GM12878 (cell line): ENCODE measurements at regions of chr11 and their contacts with region 1.

Region 1: DNA sequence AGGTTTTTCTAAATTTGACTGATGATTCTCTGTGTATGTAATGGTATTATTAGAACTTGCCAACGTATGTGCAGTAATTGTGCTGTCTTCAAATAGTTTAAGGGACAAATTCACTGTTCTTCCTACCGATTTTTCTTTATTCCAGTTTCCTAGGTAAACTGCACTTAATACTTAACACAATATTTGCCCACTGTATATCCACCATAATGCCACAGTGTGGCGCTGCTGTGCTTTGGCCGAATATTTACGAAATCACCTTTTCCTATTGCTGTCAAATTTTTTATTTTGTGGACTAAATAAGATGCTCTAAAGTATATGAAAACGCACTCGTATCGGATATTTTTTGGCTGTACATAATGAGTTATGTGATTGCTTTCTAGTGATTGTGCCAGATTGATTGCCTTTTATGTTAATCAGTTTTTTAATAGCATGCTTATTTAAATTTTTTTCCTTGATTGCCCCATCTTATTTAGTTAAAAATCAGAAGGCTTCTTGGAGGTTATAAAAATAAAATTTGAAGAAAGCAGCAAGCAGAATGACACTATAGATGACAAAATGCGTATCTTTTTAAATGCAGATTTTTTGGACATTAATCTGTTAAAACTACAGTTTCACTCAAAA is 10.5 kb downstream of the AASDHPPT start:
- DNase-seq: no peak
- ATAC-seq: peak; percentile 49
- H3K4me3 ChIP-seq: no peak overlapping the region
- H3K27ac ChIP-seq: no peak overlapping the region
- H3K4me1 ChIP-seq: peaks cover 13% of the 10 kb centered on the region
- H3K27me3 ChIP-seq: no peaks in the 10 kb centered on the region
- CTCF ChIP-seq: peak; percentile 74 to 91 (median 86)
- EP300 ChIP-seq: no peak
- POLR2A ChIP-seq: no peak
- RAD21 ChIP-seq: peak; percentile 94

Region 2: DNA sequence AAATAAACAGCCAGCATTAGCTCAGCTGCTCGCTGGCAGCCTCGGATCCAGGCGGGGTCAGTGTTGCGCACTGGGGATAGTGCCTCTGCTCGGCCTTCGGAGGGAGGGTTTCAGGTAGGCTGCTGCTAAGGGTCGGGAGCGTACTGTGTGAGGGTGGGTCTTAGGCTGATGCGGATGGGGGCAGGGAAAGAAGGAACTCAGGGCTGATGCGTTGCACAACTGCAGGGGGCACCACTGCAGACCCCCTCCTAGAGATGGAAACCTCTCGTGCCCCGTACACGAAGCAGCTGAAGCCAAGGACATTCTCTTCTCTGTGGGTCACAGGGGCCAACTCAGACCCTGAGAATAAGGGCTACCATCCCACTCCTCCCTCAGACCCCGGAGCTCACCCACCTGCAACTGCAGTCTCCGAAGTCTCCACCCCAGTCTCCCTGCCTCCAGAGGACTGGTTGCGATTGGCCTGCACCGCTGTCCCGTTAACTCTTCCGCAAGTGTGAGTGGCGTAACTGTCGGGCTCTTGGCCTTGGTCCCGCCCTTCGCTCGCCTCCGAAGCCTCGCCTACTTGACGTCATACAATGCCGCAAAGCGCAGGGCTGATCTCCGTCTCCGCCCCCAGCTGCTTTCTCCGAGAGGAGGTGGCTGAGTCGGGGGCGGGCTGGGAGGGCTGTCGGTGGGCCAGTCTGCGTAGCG is 10.9 kb before region 1 on chr11 and contains the start of gene KBTBD3:
- CTCF ChIA-PET with region 1: interaction called, 72 read pairs
- POLR2A ChIA-PET with region 1: interaction called, 8 read pairs
- RAD21 ChIA-PET with region 1: interaction called, 13 read pairs
- SMC1A ChIA-PET with region 1: interaction called, 31 read pairs
- in situ Hi-C with region 1: no loop called
- intact Hi-C with region 1: no loop called
- DNase-seq: peak; percentile 99
- ATAC-seq: peak; percentile 95
- H3K4me3 ChIP-seq: peak within 1 kb of the TSS; percentile 94
- H3K27ac ChIP-seq: peak within 1 kb of the TSS; percentile 95
- H3K4me1 ChIP-seq: peaks cover 8% of the 10 kb centered on the region
- H3K27me3 ChIP-seq: no peaks in the 10 kb centered on the region
- CTCF ChIP-seq: peak; percentile 47 to 52 (median 52)
- EP300 ChIP-seq: no peak
- POLR2A ChIP-seq: peak; percentile 81
- RAD21 ChIP-seq: no peak
- polyA plus RNA-seq, gene KBTBD3: 15.4 to 18.1 TPM

Region 3: GRCh38 chr11:106101819-106102218 is 13.9 kb after region 1 on chr11:
- CTCF ChIA-PET with region 1: interaction called, 8 read pairs
- POLR2A ChIA-PET with region 1: no interaction called
- RAD21 ChIA-PET with region 1: no interaction called
- SMC1A ChIA-PET with region 1: interaction called, 14 read pairs
- in situ Hi-C with region 1: no loop called
- intact Hi-C with region 1: no loop called
- DNase-seq: no peak
- ATAC-seq: no peak
- H3K4me3 ChIP-seq: no peak overlapping the region
- H3K27ac ChIP-seq: no peak overlapping the region
- H3K4me1 ChIP-seq: no peaks in the 10 kb centered on the region
- H3K27me3 ChIP-seq: no peaks in the 10 kb centered on the region
- CTCF ChIP-seq: no peak
- EP300 ChIP-seq: no peak
- POLR2A ChIP-seq: no peak
- RAD21 ChIP-seq: no peak

Region 4: GRCh38 chr11:106133529-106133928 is 45.6 kb after region 1 on chr11:
- CTCF ChIA-PET with region 1: interaction called, 61 read pairs
- POLR2A ChIA-PET with region 1: no interaction called
- RAD21 ChIA-PET with region 1: interaction called, 8 read pairs
- SMC1A ChIA-PET with region 1: interaction called, 13 read pairs
- in situ Hi-C with region 1: no loop called
- intact Hi-C with region 1: loop called (anchors 1 kb)
- DNase-seq: no peak
- ATAC-seq: peak; percentile 45; the same call in 1 of the 3 replicates
- H3K4me3 ChIP-seq: no peak overlapping the region
- H3K27ac ChIP-seq: no peak overlapping the region
- H3K4me1 ChIP-seq: no peaks in the 10 kb centered on the region
- H3K27me3 ChIP-seq: no peaks in the 10 kb centered on the region
- CTCF ChIP-seq: peak in 2 of 3 experiments; percentile 24 to 40; a peak in 3 of 6 replicates
- EP300 ChIP-seq: no peak
- POLR2A ChIP-seq: no peak
- RAD21 ChIP-seq: peak; percentile 65

Region 5: GRCh38 chr11:106156290-106156937 is 68.5 kb after region 1 on chr11:
- CTCF ChIA-PET with region 1: interaction called, 13 read pairs
- POLR2A ChIA-PET with region 1: no interaction called
- RAD21 ChIA-PET with region 1: interaction called, 4 read pairs
- SMC1A ChIA-PET with region 1: interaction called, 7 read pairs
- in situ Hi-C with region 1: no loop called
- intact Hi-C with region 1: loop called (anchors 1 kb)
- DNase-seq: peak; percentile 12
- ATAC-seq: peak; percentile 80
- H3K4me3 ChIP-seq: no peak overlapping the region
- H3K27ac ChIP-seq: no peak overlapping the region
- H3K4me1 ChIP-seq: no peaks in the 10 kb centered on the region
- H3K27me3 ChIP-seq: no peaks in the 10 kb centered on the region
- CTCF ChIP-seq: peak; percentile 30 to 48 (median 43); a peak in 5 of 6 replicates
- EP300 ChIP-seq: no peak
- POLR2A ChIP-seq: no peak
- RAD21 ChIP-seq: peak; percentile 53

Region 6: GRCh38 chr11:106231591-106231990 is 143.7 kb after region 1 on chr11:
- CTCF ChIA-PET with region 1: no interaction called
- POLR2A ChIA-PET with region 1: no interaction called
- RAD21 ChIA-PET with region 1: no interaction called
- SMC1A ChIA-PET with region 1: no interaction called
- in situ Hi-C with region 1: no loop called
- intact Hi-C with region 1: loop called (anchors 10 kb)
- DNase-seq: no peak
- ATAC-seq: peak; percentile 24; the same call in 2 of the 3 replicates
- H3K4me3 ChIP-seq: no peak overlapping the region
- H3K27ac ChIP-seq: no peak overlapping the region
- H3K4me1 ChIP-seq: no peaks in the 10 kb centered on the region
- H3K27me3 ChIP-seq: no peaks in the 10 kb centered on the region
- CTCF ChIP-seq: no peak
- EP300 ChIP-seq: no peak
- POLR2A ChIP-seq: no peak
- RAD21 ChIP-seq: no peak

Region 7: GRCh38 chr11:107043242-107044006 is 955.5 kb after region 1 on chr11:
- CTCF ChIA-PET with region 1: no interaction called
- POLR2A ChIA-PET with region 1: no interaction called
- RAD21 ChIA-PET with region 1: no interaction called
- SMC1A ChIA-PET with region 1: no interaction called
- in situ Hi-C with region 1: loop called (anchors 10 kb)
- intact Hi-C with region 1: no loop called
- DNase-seq: peak; percentile 71
- ATAC-seq: peak; percentile 92
- H3K4me3 ChIP-seq: no peak overlapping the region
- H3K27ac ChIP-seq: no peak overlapping the region; the same call in 1 of the 2 replicates
- H3K4me1 ChIP-seq: peaks cover 9% of the 10 kb centered on the region
- H3K27me3 ChIP-seq: no peaks in the 10 kb centered on the region
- CTCF ChIP-seq: no peak
- EP300 ChIP-seq: peak; percentile 79 to 84
- POLR2A ChIP-seq: no peak
- RAD21 ChIP-seq: no peak; the same call in 1 of the 2 replicates